ENCODE measurements at regions of chr1 and their contacts with region 1.

Region 1: DNA sequence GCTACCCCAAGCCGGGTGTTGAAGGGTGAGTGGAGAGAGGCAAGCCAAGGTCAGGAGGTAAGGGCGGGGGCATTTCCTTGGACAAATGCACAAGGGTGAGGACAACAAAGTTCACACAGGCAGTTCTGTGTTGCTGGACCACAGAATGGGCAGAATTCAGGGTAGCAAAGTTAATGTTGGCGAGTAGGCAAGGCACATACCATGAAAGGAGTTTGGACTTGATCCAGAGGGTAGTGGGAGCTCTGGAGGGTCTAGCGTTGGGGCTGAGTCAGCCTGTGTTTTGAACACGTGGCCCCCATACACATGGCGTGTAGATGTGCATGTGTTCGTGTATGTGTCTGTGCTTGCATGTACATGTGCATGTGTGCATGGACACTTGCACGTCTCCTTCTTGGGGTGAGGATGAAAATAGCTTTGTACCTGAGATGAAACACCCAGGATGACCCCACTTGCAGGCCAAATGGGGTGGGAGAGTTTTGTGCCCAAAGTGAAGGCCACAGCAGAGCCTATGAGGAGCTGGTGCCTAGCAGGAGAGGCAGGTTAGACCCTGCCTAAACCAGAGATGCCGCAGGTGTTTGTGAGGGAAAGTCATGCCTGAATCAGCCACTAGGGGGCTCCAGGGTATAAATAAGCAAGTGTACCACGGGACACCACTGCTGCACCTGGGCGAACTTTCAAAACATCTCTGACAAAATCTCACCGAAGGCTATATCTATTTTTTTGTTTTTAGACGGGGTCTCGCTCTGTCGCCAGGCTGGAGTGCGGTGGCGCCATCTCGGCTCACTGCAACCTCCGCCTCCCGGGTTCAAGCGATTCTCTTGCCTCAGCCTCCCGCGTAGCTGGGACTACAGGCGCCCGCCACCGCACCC is 21.8 kb downstream of the SLC27A3 start:
- DNase-seq: peak; percentile 69
- H3K4me3 Mint-ChIP-seq: no peak overlapping the region
- H3K27ac Mint-ChIP-seq: peak overlapping the region; percentile 31
- H3K4me1 Mint-ChIP-seq: peaks cover 17% of the 10 kb centered on the region
- H3K27me3 Mint-ChIP-seq: no peaks in the 10 kb centered on the region

Region 2: GRCh38 chr1:153958111-153958960 is 161.3 kb after region 1 on chr1 and contains the start of gene CRTC2:
- intact Hi-C with region 1: loop called (anchors 1 kb)
- DNase-seq: peak; percentile 96
- H3K4me3 Mint-ChIP-seq: peak within 1 kb of the TSS; percentile 97
- H3K27ac Mint-ChIP-seq: peak within 1 kb of the TSS; percentile 81
- H3K4me1 Mint-ChIP-seq: peaks cover 65% of the 10 kb centered on the region
- H3K27me3 Mint-ChIP-seq: no peaks in the 10 kb centered on the region
- total RNA-seq, gene CRTC2: 62.8 and 76.4 TPM in 2 replicates

Region 3: GRCh38 chr1:153977250-153978240 is 180.5 kb after region 1 on chr1 and contains the start of gene JTB:
- intact Hi-C with region 1: loop called (anchors 2 kb)
- DNase-seq: peak; percentile 80
- H3K4me3 Mint-ChIP-seq: peak within 1 kb of the TSS; percentile 94
- H3K27ac Mint-ChIP-seq: peak within 1 kb of the TSS; percentile 95
- H3K4me1 Mint-ChIP-seq: peaks cover 33% of the 10 kb centered on the region
- H3K27me3 Mint-ChIP-seq: no peaks in the 10 kb centered on the region
- total RNA-seq, gene JTB: 198 and 213 TPM in 2 replicates

Region 4: GRCh38 chr1:154157520-154158306 is 360.7 kb after region 1 on chr1:
- intact Hi-C with region 1: loop called (anchors 10 kb)
- DNase-seq: peak; percentile 79
- H3K4me3 Mint-ChIP-seq: peak overlapping the region; percentile 62
- H3K27ac Mint-ChIP-seq: peak overlapping the region; percentile 70
- H3K4me1 Mint-ChIP-seq: peaks cover 65% of the 10 kb centered on the region
- H3K27me3 Mint-ChIP-seq: no peaks in the 10 kb centered on the region